ENCODE measurements at regions of chr17 and their contacts with region 1.

Region 1: DNA sequence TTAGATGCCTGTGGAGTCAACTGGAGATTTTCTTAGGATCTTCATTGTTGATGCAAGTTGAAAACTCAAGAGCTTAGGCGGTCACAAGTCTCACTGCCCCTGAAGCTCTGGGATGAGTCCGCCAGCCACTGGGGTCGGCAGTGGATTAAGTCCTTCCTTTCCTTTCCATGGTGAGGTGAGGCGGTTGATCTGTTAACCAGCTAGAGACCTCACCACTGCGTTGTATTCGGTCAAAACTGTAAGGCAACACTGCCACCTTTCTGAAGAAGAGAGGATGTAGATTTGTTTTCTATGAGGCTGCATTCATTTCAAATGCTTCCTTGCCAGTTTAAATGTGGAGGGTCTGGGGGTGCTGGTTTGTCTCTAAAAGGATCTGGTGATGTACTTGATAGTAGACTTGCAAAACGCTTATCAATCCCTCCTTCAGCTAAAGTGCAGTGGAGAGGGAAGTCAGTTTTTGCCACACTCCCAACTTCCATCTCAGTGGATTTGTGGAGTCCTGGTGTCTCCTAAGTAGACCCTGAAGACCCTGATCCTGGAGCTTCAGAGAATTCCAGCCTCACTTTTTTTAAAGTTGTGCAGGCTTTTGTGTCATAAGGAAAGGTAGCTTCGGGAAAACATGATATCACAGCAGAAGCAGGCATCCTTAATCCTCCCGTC is 1.7 kb downstream of the MYOCD start:
- DNase-seq: peak in 1 of 2 donors; percentile 54
- ATAC-seq: peak; percentile 65 to 84 (median 74)
- H3K4me3 ChIP-seq: peak overlapping the region; percentile 35 to 79 (median 67)
- H3K27ac ChIP-seq: peak overlapping the region; percentile 70 to 87 (median 78)
- H3K4me1 ChIP-seq: peaks cover 0 to 32% (median 12%) of the 10 kb centered on the region in 9 donors
- H3K27me3 ChIP-seq: peaks cover 0 to 45% (median 19%) of the 10 kb centered on the region in 7 donors
- CTCF ChIP-seq: peak in 8 of 9 donors; percentile 12 to 68 (median 51)

Region 2: GRCh38 chr17:12180644-12181261 is 486.7 kb before region 1 on chr17:
- intact Hi-C with region 1: loop called in 5 of 10 experiments (anchors 5 kb)
- DNase-seq: peak in 1 of 2 donors; percentile 36
- ATAC-seq: peak in 2 of 8 donors; percentile 31 to 56
- H3K4me3 ChIP-seq: no peak overlapping the region
- H3K27ac ChIP-seq: no peak overlapping the region
- H3K4me1 ChIP-seq: no peaks in the 10 kb centered on the region
- H3K27me3 ChIP-seq: no peaks in the 10 kb centered on the region
- CTCF ChIP-seq: peak; percentile 48 to 79 (median 73)

Region 3: DNA sequence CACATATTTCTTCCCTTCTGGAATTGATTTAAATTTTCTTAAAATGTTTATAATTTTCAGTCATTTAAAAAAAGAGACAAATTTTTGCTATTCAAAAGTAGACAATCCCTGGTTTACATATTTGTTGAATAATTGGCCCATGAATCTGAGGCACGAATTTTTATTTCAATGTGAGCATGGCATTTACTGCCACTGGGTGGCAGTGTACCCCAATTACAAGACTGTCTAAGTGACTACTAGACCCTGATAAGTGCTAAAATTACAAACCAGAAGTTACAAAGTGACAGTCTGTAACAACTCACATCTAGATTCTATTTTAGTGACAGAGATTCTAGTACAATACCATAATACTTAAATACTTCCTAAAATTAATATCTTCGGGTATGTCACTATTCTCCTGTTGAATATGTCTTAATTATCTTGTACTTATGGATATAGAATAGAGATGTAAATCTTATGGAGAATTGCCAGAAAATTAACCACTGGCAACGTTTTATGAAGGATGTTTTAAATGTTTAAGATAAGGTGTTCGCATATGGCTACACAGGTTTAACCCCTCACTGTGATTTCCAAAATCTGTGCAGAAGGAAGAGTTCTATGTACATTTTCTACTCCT is 410.9 kb before region 1 on chr17:
- intact Hi-C with region 1: loop called (anchors 2 to 10 kb)
- DNase-seq: peak in 1 of 2 donors; percentile 15
- ATAC-seq: peak; percentile 56 to 83 (median 78)
- H3K4me3 ChIP-seq: no peak overlapping the region
- H3K27ac ChIP-seq: no peak overlapping the region
- H3K4me1 ChIP-seq: peaks cover 0 to 18% (median 0%) of the 10 kb centered on the region in 9 donors
- H3K27me3 ChIP-seq: no peaks in the 10 kb centered on the region
- CTCF ChIP-seq: peak; percentile 57 to 82 (median 73)

Region 4: GRCh38 chr17:12730931-12731521 is 63.6 kb after region 1 on chr17:
- intact Hi-C with region 1: loop called in 2 of 10 experiments (anchors 2 kb)
- DNase-seq: peak; percentile 79 to 87
- ATAC-seq: peak; percentile 75 to 92 (median 84)
- H3K4me3 ChIP-seq: no peak overlapping the region
- H3K27ac ChIP-seq: peak overlapping the region; percentile 60 to 91 (median 80)
- H3K4me1 ChIP-seq: peaks cover 0 to 58% (median 24%) of the 10 kb centered on the region in 9 donors
- H3K27me3 ChIP-seq: no peaks in the 10 kb centered on the region
- CTCF ChIP-seq: no peak

Region 5: DNA sequence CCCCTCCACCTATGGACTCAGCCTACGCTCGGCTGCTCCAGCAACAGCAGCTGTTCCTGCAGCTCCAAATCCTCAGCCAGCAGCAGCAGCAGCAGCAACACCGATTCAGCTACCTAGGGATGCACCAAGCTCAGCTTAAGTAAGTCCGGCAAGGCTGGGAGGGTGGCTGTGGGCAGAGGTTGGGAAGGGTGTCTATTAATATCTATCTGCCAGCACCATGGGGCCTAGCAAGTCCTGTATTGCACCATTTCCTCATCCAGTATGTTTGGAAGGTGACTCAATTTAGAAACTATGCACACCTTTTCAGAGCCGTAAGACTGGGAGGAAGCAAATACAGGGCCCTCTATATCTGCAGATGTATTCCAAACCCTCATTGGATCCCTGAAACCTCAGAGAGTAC is 76.9 kb after region 1 on chr17:
- intact Hi-C with region 1: loop called in 6 of 10 experiments (anchors 2 to 5 kb)
- DNase-seq: peak; percentile 43 to 68
- ATAC-seq: peak; percentile 70 to 97 (median 91)
- H3K4me3 ChIP-seq: peak overlapping the region in 8 of 10 donors; percentile 1 to 38 (median 14)
- H3K27ac ChIP-seq: peak overlapping the region; percentile 24 to 87 (median 79)
- H3K4me1 ChIP-seq: peaks cover 0 to 23% (median 7%) of the 10 kb centered on the region in 9 donors
- H3K27me3 ChIP-seq: no peaks in the 10 kb centered on the region
- CTCF ChIP-seq: no peak